MCF 10A (cell line): ENCODE measurements at regions of chr5 and their contacts with region 1.

Region 1: DNA sequence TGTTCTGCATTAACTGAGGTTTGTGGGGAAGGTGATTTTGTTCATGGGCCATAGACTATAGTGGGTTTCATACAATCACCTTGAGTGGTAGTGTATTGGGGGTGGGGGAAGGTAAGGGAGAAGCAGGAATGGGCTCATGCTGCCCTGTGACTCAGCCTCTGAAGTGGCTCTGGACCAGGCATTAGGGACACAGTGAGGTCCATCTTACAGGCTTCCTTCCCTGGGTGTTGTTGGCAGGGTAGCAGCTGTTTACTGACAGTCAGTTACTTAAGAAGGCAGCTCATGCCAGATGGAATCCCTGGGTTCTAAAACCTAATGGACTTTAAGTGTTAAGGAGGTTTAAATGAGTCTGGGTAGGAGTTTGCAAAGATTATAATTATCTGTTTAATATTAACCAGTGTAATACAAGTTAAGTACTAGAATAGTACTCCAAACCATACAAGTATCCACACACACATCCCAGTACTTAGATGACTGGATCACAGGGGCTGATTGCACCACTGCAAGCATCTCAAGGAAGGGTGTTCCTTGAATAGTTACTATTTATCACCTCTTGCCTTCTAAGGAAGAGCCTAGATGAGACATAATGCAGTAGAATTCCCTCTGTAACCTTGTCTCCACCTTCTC is 59.3 kb downstream of the CAST start:
- DNase-seq: peak; percentile 39
- H3K4me3 Mint-ChIP-seq: no peak overlapping the region
- H3K27ac Mint-ChIP-seq: peak overlapping the region; percentile 35
- H3K4me1 Mint-ChIP-seq: peaks cover 38% of the 10 kb centered on the region
- H3K27me3 Mint-ChIP-seq: no peaks in the 10 kb centered on the region
- CTCF ChIP-seq: no peak

Region 2: GRCh38 chr5:96709152-96709821 is 12.2 kb before region 1 on chr5:
- CTCF ChIA-PET with region 1: interaction called, 8 read pairs
- POLR2A ChIA-PET with region 1: interaction called, 177 read pairs
- intact Hi-C with region 1: no loop called
- DNase-seq: peak; percentile 49
- H3K4me3 Mint-ChIP-seq: peak overlapping the region; percentile 8
- H3K27ac Mint-ChIP-seq: peak overlapping the region; percentile 63
- H3K4me1 Mint-ChIP-seq: peaks cover 45% of the 10 kb centered on the region
- H3K27me3 Mint-ChIP-seq: no peaks in the 10 kb centered on the region
- CTCF ChIP-seq: no peak

Region 3: DNA sequence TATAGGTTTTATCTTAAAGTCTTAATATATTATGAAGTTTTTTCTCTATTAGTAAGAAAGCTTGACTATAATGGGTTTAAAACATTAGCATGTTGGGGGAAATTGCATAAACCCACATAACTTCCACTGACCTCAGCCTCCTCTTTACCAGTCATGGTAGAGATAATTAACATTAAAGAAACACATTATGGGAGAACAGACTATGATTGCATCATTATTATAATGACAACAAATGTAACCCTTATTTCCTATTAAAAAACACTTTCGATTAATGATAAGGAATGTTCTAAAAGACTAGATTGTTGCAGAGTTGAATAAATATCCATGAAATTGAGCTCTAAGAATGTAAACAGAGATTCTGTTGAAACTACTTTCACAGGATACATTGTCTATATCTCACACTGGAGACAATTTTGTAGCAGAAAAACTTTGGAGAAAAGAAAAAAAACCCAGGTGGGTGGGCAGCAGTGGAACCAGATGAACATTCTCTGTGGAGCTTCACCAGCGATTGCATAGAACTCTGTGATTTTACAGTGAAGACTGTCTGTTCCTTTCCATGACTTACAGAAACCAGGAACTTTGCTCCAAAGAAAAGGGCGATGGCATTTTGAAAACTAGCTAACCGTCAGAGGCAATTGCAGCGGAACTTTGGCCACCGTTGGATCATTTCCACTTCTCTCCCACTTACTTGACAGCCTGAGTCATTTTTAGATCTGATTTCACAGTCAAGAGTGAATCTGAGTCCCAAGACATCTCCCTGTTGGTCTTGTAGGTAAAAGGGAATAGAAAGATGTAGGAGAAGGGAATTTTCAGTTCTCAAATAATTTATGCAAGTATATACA is 133.8 kb after region 1 on chr5:
- CTCF ChIA-PET with region 1: no interaction called
- POLR2A ChIA-PET with region 1: no interaction called
- intact Hi-C with region 1: no loop called
- DNase-seq: peak; percentile 20
- H3K4me3 Mint-ChIP-seq: no peak overlapping the region
- H3K27ac Mint-ChIP-seq: no peak overlapping the region
- H3K4me1 Mint-ChIP-seq: no peaks in the 10 kb centered on the region
- H3K27me3 Mint-ChIP-seq: no peaks in the 10 kb centered on the region
- CTCF ChIP-seq: no peak